Activated CD4-positive, alpha-beta T cell treated with anti-CD3 and anti-CD28 coated beads for 36 hours (primary cell): ENCODE measurements at regions of chr11 and their contacts with region 1.

Region 1: GRCh38 chr11:59753650-59754493 is 1.3 kb upstream of the STX3 start:
- DNase-seq: peak; percentile 92
- ATAC-seq: peak; percentile 79
- H3K4me3 Mint-ChIP-seq: peak overlapping the region; percentile 84
- H3K27ac Mint-ChIP-seq: peak overlapping the region; percentile 53
- H3K4me1 Mint-ChIP-seq: peaks cover 15% of the 10 kb centered on the region
- H3K27me3 Mint-ChIP-seq: peaks cover 6% of the 10 kb centered on the region

Region 2: GRCh38 chr11:59615637-59616395 is 138.1 kb before region 1 on chr11 and contains the start of gene OSBP:
- CTCF ChIA-PET with region 1: interaction called, 4 read pairs
- POLR2A ChIA-PET with region 1: no interaction called
- intact Hi-C with region 1: loop called in 1 of 2 experiments (anchors 5 kb)
- DNase-seq: peak; percentile 98
- ATAC-seq: peak; percentile 88
- H3K4me3 Mint-ChIP-seq: peak within 1 kb of the TSS; percentile 99
- H3K27ac Mint-ChIP-seq: peak within 1 kb of the TSS; percentile 96
- H3K4me1 Mint-ChIP-seq: peaks cover 40% of the 10 kb centered on the region
- H3K27me3 Mint-ChIP-seq: no peaks in the 10 kb centered on the region
- total RNA-seq, gene OSBP: 37.9 to 44.2 TPM

Region 3: DNA sequence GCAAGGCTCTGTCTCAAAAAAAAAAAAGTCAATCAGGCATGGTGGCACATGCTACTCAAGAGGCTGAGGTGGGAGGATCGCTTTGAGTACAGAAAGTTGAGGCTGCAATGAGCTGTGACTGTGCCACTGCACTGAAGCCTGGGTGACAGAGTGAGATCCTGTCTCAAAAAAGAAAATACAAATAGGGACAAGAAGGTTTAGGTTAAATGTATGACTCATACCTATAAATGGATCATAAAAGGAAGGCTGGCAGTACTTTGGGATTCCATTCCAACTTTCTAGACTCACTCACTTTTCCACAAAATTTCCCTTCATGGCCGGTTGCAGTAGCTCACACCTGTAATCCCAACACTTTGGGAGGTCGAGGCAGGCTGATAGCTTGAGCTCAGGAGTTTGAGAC is 112.7 kb before region 1 on chr11:
- CTCF ChIA-PET with region 1: no interaction called
- POLR2A ChIA-PET with region 1: no interaction called
- intact Hi-C with region 1: no loop called
- DNase-seq: no peak
- ATAC-seq: no peak
- H3K4me3 Mint-ChIP-seq: no peak overlapping the region
- H3K27ac Mint-ChIP-seq: no peak overlapping the region
- H3K4me1 Mint-ChIP-seq: no peaks in the 10 kb centered on the region
- H3K27me3 Mint-ChIP-seq: no peaks in the 10 kb centered on the region

Region 4: GRCh38 chr11:59767225-59767611 is 13.3 kb after region 1 on chr11:
- CTCF ChIA-PET with region 1: interaction called, 16 read pairs
- POLR2A ChIA-PET with region 1: no interaction called
- intact Hi-C with region 1: no loop called
- DNase-seq: no peak
- ATAC-seq: peak; percentile 65
- H3K4me3 Mint-ChIP-seq: no peak overlapping the region
- H3K27ac Mint-ChIP-seq: peak overlapping the region; percentile 17
- H3K4me1 Mint-ChIP-seq: peaks cover 13% of the 10 kb centered on the region
- H3K27me3 Mint-ChIP-seq: no peaks in the 10 kb centered on the region

Region 5: DNA sequence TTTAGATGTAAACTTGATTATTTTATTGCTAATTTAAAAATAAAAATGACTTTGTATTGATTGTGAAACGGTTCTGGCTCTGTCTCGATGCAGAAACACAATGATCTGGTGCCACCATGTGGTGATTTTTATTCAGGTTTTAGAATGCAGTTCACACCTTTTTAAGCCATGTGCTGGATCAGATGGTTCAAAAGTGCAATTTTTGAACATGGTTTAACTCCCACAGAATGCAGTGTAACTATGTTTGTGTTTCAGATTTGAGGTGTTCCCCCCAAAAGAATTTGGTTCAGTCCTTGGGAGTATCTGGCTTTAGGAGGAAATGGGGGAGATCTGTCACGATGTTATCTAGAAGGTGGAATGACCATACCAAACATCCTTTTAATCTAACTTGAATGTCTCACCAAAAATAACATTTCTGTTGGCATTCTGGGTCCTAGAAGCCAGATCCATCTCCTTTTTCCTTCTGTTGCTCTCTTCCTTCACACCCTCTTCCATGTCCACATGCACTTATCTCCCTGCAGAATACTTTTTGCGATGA is 48.8 kb after region 1 on chr11:
- CTCF ChIA-PET with region 1: interaction called, 73 read pairs
- POLR2A ChIA-PET with region 1: no interaction called
- intact Hi-C with region 1: loop called (anchors 1 kb)
- DNase-seq: peak; percentile 40
- ATAC-seq: peak; percentile 61
- H3K4me3 Mint-ChIP-seq: no peak overlapping the region
- H3K27ac Mint-ChIP-seq: no peak overlapping the region
- H3K4me1 Mint-ChIP-seq: no peaks in the 10 kb centered on the region
- H3K27me3 Mint-ChIP-seq: no peaks in the 10 kb centered on the region

Region 6: DNA sequence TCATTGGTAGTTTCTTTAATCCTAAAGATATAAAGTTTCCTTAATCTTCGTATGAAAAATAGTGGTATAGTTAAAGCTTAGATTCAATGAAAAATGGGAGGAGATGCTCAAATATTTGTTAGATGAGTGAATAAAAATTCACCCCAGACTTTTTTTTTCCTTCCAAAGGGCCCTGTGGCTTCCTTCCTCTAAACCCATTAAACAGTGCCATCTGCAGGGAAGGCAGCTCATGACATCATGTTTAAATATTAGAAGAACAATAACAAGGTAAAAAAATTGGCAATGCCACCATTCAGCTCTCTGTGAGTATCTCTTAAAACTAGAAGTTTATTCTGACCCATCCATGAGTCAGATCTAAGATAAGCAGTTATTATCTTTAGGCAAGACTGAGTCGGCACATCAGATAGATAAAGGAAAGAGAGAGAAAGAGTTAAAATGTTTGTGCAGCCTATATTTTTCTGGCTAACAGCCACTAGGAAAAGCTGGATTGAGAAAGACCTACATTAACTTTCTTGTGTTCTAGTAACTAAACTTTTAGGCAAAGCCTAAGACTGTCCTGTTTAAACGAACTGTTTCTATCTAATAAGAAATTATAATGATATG is 165.2 kb after region 1 on chr11:
- CTCF ChIA-PET with region 1: interaction called, 6 read pairs
- POLR2A ChIA-PET with region 1: no interaction called
- intact Hi-C with region 1: loop called (anchors 1 to 2 kb)
- DNase-seq: peak; percentile 37
- ATAC-seq: peak; percentile 44
- H3K4me3 Mint-ChIP-seq: no peak overlapping the region
- H3K27ac Mint-ChIP-seq: no peak overlapping the region
- H3K4me1 Mint-ChIP-seq: no peaks in the 10 kb centered on the region
- H3K27me3 Mint-ChIP-seq: peaks cover 2% of the 10 kb centered on the region

Region 7: DNA sequence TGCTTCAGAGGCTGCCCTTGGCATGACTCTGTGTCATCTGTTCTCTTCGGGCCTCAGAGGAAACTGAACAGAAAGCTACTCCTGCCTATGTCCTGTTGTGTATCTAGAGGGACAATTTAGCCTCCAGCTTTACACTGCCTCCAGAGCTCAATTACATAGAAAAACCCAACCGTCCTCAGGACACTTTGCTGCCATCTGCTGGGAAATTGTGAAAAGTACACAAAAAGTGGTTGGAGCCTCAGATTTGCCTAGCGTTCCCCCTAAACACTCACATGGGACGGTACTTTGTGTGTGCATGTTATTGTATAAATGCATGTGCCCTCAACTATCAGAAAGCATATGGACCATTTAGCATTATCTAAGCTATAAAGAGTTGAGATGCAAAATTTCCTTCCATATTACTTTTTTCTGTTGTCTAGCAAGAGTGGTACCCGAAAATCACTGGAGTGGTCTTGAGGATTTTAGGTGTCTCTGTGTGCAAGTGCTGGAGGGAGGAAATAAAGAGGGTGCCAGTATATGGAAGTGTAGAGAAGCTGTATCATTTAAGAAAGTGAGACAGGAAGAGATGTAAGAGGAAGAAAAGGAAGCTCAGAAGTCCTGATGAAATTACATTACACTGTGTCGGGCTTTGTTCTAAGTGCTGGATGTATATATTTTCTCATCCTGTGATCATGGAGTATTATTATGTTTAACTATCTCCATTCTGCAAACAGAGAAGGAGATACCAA is 497.8 kb after region 1 on chr11:
- CTCF ChIA-PET with region 1: no interaction called
- POLR2A ChIA-PET with region 1: no interaction called
- intact Hi-C with region 1: loop called in 1 of 2 experiments (anchors 5 kb)
- DNase-seq: peak; percentile 52
- ATAC-seq: no peak
- H3K4me3 Mint-ChIP-seq: no peak overlapping the region
- H3K27ac Mint-ChIP-seq: no peak overlapping the region
- H3K4me1 Mint-ChIP-seq: no peaks in the 10 kb centered on the region
- H3K27me3 Mint-ChIP-seq: peaks cover 35% of the 10 kb centered on the region